Colonic mucosa (tissue), 4 donors: ENCODE measurements at regions of chr13 and their contacts with region 1.

Region 1: DNA sequence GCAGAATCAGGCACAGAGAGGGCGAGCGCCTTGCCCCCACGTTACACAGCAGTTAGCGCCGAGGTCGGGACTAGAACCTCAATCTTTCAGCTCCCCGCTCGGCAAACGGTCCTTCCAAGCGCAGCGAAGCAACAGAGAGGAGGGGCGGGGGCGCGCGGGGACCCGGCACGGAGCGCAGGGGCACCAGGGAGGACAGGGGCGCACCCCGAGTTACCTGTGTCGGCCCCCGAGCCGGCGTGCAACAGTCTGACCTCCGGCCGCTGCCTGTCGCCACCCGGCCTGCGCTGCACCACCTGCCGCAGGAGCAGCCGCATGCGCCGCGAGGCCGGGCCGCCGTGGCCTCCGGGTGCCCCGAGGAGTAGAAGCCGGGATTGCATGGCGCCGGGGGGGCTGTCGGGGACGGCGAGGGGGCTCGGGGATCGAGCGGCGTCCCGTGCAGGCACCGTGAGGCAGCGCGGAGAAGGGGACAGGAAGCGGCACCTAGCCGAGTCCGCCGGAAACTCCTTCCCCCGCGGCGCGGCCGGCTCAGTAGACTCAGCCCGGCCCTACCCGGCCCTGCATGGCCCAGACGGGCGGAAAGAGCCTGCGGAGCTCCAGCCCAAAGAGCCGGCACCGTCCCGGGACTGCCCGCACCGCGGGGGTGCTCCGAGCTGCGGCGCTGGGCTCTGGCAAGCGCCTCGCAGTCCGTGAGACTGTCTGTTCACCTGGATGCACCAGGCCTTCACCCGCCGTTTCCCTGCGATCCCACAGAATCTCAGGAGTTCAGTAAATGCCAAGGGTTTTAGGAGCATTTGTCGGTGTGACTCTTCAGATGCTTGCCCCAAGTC is at the start of gene VWA8:
- DNase-seq: peak; percentile 81
- H3K4me3 ChIP-seq: peak within 1 kb of the TSS; percentile 92
- H3K27ac ChIP-seq: peak within 1 kb of the TSS; percentile 76
- H3K4me1 ChIP-seq: peaks cover 5% of the 10 kb centered on the region
- H3K27me3 ChIP-seq: no peaks in the 10 kb centered on the region
- CTCF ChIP-seq: no peak
- total RNA-seq, gene VWA8: 23.8 to 31.8 TPM

Region 2: DNA sequence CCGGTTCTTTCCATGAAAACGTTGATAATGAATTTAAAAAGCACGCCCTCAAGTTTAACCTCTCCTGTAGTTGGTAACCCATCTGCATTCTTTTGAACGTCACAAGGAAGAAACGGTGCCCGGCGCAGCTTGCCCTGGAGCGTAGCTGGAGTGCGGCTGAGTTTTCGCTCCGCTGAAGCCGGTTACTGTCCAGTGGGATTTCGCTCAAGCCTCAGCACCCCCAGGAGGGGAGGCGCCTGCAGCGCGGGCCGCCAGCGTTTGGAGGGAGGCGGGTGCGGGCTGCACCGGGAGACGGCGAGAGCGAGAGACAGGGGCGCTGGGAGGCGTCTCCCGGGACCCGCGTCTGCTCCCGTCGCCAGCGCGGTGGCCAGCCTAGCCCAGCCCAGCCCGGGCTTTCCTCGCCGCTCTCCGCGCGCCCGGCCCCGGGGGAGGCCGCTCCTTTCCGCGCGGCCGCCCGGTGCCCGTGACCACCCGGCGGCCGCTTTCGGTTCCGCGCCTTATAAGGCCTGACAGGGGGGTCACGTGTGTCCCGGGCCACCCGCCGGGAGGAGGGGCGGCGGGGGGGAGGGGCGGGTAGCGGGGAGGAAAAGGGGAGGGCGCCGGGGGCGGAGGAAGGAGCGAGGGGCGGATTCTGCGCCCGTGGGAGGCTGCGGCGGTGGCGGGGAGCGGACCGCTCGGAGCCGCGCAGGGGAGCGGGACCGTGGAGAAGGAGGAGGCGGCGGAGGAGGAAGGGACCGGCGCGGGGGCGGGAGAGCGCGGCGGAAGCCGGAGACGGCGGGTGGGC is 79.3 kb after region 1 on chr13:
- intact Hi-C with region 1: loop called (anchors 5 kb)
- DNase-seq: peak; percentile 95
- H3K4me3 ChIP-seq: peak overlapping the region; percentile 92
- H3K27ac ChIP-seq: peak overlapping the region; percentile 96
- H3K4me1 ChIP-seq: no peaks in the 10 kb centered on the region
- H3K27me3 ChIP-seq: no peaks in the 10 kb centered on the region
- CTCF ChIP-seq: no peak